ENCODE measurements at regions of chr4 and their contacts with region 1.

Region 1: DNA sequence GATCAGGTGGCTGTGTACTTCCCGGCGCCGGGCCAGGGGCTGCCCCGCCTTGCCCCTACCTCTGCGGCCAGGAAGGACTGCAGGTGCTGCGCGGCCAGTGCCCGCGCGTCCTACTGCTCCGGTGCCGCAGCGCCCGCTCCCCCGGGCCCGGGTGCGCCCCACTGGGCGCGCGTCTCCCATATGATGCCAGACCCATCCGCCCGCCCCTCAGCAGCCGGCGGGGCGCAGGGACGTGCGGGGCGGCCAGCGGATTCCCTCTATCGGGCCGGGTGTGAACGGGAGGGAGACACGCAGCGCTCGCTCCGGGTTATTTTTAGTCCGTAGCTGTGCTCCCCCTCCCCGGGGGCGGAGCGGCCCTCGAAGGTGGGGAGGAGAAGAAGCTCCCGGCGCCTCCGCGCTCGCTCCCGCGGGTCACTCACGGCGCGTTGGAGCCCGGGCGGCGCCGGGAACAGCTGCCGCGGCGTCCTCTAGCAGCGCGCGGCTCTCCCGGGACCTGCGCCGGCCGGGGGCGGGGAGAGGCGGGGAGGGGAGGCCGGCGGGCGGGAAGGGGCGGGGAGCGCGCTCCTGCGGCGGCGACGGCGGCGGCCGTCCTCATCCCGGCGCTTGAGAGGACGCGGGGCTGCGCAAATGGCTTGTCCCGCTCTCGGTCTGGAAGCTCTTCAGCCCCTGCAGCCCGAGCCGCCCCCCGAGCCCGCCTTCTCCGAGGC is 103.6 kb downstream of the UCHL1 start:
- DNase-seq: no peak
- H3K4me3 Mint-ChIP-seq: no peak overlapping the region
- H3K27ac Mint-ChIP-seq: no peak overlapping the region
- H3K4me1 Mint-ChIP-seq: no peaks in the 10 kb centered on the region
- H3K27me3 Mint-ChIP-seq: peaks cover 47% of the 10 kb centered on the region

Region 2: GRCh38 chr4:41865306-41865980 is 505.1 kb after region 1 on chr4:
- intact Hi-C with region 1: loop called (anchors 10 kb)
- DNase-seq: no peak
- H3K4me3 Mint-ChIP-seq: no peak overlapping the region
- H3K27ac Mint-ChIP-seq: no peak overlapping the region
- H3K4me1 Mint-ChIP-seq: peaks cover 5% of the 10 kb centered on the region
- H3K27me3 Mint-ChIP-seq: peaks cover 70% of the 10 kb centered on the region

Measured in activated T-helper 1 cell treated with anti-CD3 and anti-CD28 coated beads, Interleukin-12 subunit alpha, Interleukin-12 subunit beta, Interleukin-2, Interleukin-4 antibody, amounts not matched to agents 30 ng/mL and 10 ng/mL and 1 ng/mL, durations not matched to agents 14 hours and 24 hours and 36 hours (primary cell).